ENCODE measurements at regions of chr11 and their contacts with region 1.

Region 1: DNA sequence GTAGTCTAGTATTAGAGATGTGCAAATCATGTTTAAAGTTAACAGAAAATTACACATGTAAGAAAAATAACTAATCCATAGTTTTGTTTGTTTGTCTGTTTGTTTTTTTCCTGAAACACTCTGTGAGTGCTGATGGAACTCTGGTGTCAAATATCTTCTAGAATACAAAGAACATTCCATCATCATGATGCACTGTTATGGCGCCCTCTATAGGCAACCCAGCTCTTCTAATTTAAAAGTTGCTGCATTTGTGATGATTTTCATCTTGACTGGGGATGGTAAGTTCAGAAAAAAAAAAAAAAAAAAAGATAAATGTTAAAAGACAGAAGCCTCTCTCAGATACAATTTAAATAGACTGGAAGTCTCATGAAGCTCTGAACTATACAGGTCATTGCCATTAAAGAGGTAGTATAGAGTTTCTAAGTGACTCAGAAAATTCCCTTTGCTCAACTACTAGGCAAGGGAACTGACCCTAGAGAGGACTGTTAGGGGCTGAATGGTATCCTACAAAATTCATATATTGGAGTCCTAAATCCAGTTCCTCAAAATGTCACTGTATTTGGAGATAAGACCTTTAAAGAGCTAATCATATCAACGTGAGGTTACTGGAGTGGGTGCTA is 597.2 kb upstream of the ANO3 start:
- DNase-seq: no peak
- H3K4me3 Mint-ChIP-seq: no peak overlapping the region
- H3K27ac Mint-ChIP-seq: no peak overlapping the region
- H3K4me1 Mint-ChIP-seq: no peaks in the 10 kb centered on the region
- H3K27me3 Mint-ChIP-seq: no peaks in the 10 kb centered on the region

Region 2: GRCh38 chr11:25794804-25795203 is 60.1 kb after region 1 on chr11:
- CTCF ChIA-PET with region 1: no interaction called
- intact Hi-C with region 1: no loop called
- DNase-seq: no peak
- H3K4me3 Mint-ChIP-seq: no peak overlapping the region
- H3K27ac Mint-ChIP-seq: no peak overlapping the region
- H3K4me1 Mint-ChIP-seq: no peaks in the 10 kb centered on the region
- H3K27me3 Mint-ChIP-seq: no peaks in the 10 kb centered on the region

Region 3: DNA sequence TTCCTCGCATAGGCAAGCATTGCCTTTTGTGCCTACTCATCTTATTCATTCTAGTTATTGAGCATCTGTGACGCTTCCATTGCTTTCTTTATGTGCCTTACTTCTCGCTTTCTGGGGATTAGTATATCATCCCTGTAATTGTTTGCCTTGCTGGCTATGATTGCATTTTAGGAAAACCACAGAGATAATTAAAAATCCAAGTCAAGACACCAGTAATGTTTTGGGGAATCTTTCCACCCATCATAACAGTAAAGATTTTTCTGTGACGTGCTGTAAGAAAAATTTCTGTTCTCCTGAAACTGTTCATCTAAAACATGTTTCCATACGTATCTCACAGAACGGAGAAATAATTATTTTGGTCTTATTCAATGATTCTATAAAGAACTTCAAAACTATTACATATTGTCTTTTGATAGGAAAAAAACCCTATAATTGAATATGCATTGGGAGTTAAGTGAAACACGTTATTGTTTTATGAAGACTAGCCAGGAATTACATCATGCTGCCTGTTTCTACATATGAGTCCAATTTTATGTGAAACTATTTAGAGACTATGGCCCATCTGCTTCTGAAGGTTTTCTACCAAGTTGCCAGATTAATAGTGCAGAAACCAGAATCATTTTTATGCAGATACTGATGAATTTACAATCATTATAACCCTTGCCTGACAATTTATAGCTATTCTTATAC is 1125.5 kb after region 1 on chr11:
- CTCF ChIA-PET with region 1: no interaction called
- intact Hi-C with region 1: loop called (anchors 5 kb)
- DNase-seq: no peak
- H3K4me3 Mint-ChIP-seq: no peak overlapping the region
- H3K27ac Mint-ChIP-seq: no peak overlapping the region
- H3K4me1 Mint-ChIP-seq: no peaks in the 10 kb centered on the region
- H3K27me3 Mint-ChIP-seq: no peaks in the 10 kb centered on the region